Posterior vena cava (tissue), 2 donors: ENCODE measurements at regions of chr14 and their contacts with region 1.

Region 1: DNA sequence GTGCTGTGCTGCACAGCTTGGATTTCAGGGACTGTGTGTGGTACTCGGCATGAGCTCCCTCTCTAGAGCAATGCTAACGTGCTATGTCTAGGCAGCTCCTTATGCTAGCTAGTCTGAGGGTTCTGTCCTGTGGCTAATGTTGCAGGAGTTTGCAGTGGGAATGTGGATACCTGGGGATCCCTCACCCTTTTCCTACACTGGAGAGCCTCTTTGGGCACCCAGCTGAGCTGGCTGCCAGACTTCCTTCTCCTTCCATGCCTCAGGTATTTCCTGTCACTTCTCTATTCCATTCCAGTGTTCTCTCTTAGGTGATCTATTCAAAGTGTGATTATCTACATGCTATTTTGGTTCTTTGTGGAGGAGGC is 64.9 kb downstream of the FBXO33 start:
- DNase-seq: no peak

Region 2: GRCh38 chr14:38971255-38971921 is 396.0 kb before region 1 on chr14:
- intact Hi-C with region 1: no loop called
- DNase-seq: no peak

Region 3: DNA sequence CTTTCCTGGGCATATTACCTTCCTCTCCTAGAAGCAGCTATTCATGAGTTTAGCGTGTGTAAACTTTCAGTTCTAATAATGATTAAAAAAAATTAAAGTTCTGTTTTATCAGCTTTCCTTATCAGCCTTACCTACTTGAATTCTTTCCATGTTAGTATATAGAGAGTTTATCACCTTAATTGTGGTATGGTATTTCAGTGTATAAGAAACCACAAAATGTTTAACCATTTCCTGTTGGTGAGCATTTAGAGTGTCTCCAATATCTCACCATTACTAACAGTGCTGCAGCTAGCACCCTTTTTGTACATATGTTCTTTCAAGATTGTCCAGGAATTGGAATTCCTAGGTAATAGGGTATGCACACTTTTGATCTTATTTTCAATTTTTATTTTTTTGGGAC is 24.6 kb before region 1 on chr14:
- intact Hi-C with region 1: loop called in 1 of 2 experiments (anchors 2 kb)
- DNase-seq: no peak